Activated CD4-positive, alpha-beta T cell treated with anti-CD3 and anti-CD28 coated beads, Interleukin-2, amount 10 ng/mL, durations not matched to agents 24 days and 14 days (primary cell): ENCODE measurements at regions of chr12 and their contacts with region 1.

Region 1: GRCh38 chr12:63843721-63844390 is 644 bp upstream of the SRGAP1 start:
- DNase-seq: peak; percentile 92
- H3K4me3 Mint-ChIP-seq: peak overlapping the region; percentile 72
- H3K27ac Mint-ChIP-seq: no peak overlapping the region
- H3K4me1 Mint-ChIP-seq: peaks cover 8% of the 10 kb centered on the region
- H3K27me3 Mint-ChIP-seq: peaks cover 43% of the 10 kb centered on the region

Region 2: GRCh38 chr12:63764481-63764880 is 79.4 kb before region 1 on chr12:
- intact Hi-C with region 1: no loop called
- DNase-seq: no peak
- H3K4me3 Mint-ChIP-seq: no peak overlapping the region
- H3K27ac Mint-ChIP-seq: no peak overlapping the region
- H3K4me1 Mint-ChIP-seq: peaks cover 1% of the 10 kb centered on the region
- H3K27me3 Mint-ChIP-seq: peaks cover 28% of the 10 kb centered on the region

Region 3: DNA sequence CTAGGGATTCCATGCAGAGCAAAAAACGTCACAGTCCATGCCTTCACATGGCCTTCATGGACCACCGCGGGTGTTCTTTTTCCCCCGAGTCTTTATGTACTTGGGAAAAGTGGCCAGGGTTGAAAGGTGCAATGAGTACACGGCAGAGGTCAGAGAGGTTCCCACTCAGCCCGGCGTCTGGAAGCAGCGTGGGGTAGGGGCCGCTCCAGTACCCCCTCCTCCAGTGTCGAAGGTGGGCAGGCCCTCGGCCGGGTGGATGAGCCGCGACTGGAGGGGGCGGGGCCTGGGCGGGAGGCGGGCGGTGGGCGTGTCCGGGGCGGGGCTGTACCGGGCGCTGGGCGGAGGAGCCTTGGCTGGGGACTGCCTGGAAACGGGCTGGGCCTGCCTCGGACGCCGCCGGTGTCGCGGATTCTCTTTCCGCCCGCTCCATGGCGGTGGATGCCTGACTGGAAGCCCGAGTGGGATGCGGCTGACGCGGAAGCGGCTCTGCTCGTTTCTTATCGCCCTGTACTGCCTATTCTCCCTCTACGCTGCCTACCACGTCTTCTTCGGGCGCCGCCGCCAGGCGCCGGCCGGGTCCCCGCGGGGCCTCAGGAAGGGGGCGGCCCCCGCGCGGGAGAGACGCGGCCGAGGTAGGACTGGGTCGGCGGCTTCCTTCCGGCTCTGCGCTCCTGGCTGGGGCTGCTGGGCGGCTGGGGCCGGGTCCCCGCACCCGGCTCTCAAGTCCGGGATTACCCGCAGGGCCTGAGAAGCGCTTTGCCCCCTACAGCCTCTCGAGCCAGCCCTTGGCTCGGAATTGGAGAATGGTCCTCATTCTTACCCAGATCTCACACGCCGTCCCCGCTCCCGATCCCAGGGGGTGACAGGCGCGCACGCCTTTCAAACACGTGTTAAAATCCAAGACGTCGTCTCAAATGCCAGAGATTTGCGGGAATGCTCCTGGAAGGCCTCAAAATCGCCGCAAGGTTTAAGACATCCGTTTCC is 64.1 kb before region 1 on chr12 and contains the start of gene RXYLT1:
- intact Hi-C with region 1: loop called (anchors 5 kb)
- DNase-seq: peak; percentile 93
- H3K4me3 Mint-ChIP-seq: peak within 1 kb of the TSS; percentile 95
- H3K27ac Mint-ChIP-seq: peak within 1 kb of the TSS; percentile 94
- H3K4me1 Mint-ChIP-seq: peaks cover 19% of the 10 kb centered on the region
- H3K27me3 Mint-ChIP-seq: peaks cover 6% of the 10 kb centered on the region
- total RNA-seq, gene RXYLT1: 26.6 and 27.6 TPM in 2 replicates

Region 4: GRCh38 chr12:64222009-64222765 is 378.3 kb after region 1 on chr12 and contains the start of gene KICS2:
- intact Hi-C with region 1: loop called (anchors 1 kb)
- DNase-seq: peak; percentile 97
- H3K4me3 Mint-ChIP-seq: peak within 1 kb of the TSS; percentile 90
- H3K27ac Mint-ChIP-seq: peak within 1 kb of the TSS; percentile 97
- H3K4me1 Mint-ChIP-seq: peaks cover 22% of the 10 kb centered on the region
- H3K27me3 Mint-ChIP-seq: peaks cover 18% of the 10 kb centered on the region
- total RNA-seq, gene KICS2: 12.8 and 17.1 TPM in 2 replicates

Region 5: GRCh38 chr12:64256166-64256800 is 412.4 kb after region 1 on chr12:
- intact Hi-C with region 1: loop called (anchors 1 kb)
- DNase-seq: peak; percentile 71
- H3K4me3 Mint-ChIP-seq: no peak overlapping the region
- H3K27ac Mint-ChIP-seq: no peak overlapping the region
- H3K4me1 Mint-ChIP-seq: no peaks in the 10 kb centered on the region
- H3K27me3 Mint-ChIP-seq: no peaks in the 10 kb centered on the region

Region 6: DNA sequence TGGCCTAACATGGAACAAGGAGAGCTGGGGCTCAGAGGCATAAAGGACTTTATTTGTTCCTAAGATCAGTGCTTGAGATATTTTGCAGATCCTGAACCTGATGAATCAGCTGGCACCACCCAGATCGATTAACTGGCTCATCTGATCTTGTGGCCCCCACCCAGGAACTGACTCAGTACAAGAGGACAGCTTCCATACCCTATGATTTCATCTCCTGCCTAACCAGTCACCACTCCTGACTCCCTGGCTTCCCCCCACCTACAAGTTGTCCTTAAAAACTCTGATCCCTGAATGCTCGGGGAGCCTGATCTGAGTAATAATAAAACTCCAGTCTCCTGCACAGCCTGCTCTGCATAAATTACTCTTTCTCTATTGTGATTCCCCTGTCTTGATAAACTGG is 541.6 kb after region 1 on chr12:
- intact Hi-C with region 1: loop called (anchors 5 kb)
- DNase-seq: peak; percentile 75
- H3K4me3 Mint-ChIP-seq: peak overlapping the region; percentile 66
- H3K27ac Mint-ChIP-seq: peak overlapping the region; percentile 90
- H3K4me1 Mint-ChIP-seq: peaks cover 25% of the 10 kb centered on the region
- H3K27me3 Mint-ChIP-seq: peaks cover 6% of the 10 kb centered on the region

Region 7: DNA sequence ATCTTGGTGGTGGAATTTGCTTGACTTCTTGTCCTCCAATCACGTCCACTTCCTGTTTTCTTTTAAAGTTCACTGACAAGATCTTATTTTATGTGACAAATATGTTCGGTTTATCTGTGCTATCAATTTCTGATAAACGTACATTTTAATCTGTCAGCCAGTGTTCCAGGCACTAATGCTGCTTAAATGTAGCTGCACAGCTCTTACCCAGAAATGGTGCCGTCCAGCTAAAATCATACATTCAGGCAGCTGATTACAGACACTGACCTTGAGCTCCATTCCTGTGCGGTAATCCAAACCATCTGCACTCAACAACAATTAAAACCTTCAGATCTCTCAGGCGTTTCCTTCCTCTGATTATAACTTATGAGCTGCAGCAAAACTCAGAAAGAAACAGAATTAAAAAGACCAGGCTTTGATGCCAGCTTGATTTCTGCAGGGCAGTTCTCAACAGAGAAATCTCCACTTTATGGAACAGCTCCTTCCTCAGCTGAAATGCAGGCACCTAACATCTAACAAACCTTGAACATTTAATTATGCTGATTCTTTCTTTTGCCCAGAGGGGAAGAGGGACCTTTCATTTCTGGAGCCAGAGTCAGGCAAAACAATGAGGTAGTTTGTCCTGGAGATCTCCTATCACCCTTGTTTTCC is 740.0 kb after region 1 on chr12:
- intact Hi-C with region 1: no loop called
- DNase-seq: no peak
- H3K4me3 Mint-ChIP-seq: peak overlapping the region; percentile 31
- H3K27ac Mint-ChIP-seq: no peak overlapping the region
- H3K4me1 Mint-ChIP-seq: peaks cover 11% of the 10 kb centered on the region
- H3K27me3 Mint-ChIP-seq: peaks cover 6% of the 10 kb centered on the region